H1 (cell line): ENCODE measurements at regions of chr1 and their contacts with region 1.

Region 1: GRCh38 chr1:62424411-62424810 is 12.4 kb upstream of the USP1 start:
- DNase-seq: no peak
- H3K4me3 ChIP-seq: no peak overlapping the region
- H3K27ac ChIP-seq: no peak overlapping the region
- H3K4me1 ChIP-seq: peaks cover 0 to 3% (median 1%) of the 10 kb centered on the region in 4 experiments; a peak in 2 of 7 replicates
- H3K27me3 ChIP-seq: no peaks in the 10 kb centered on the region
- CTCF ChIP-seq: no peak
- EP300 ChIP-seq: no peak
- POLR2A ChIP-seq: no peak
- RAD21 ChIP-seq: no peak

Region 2: GRCh38 chr1:62194651-62195544 is 229.5 kb before region 1 on chr1 and contains the start of gene L1TD1:
- CTCF ChIA-PET with region 1: no interaction called
- POLR2A ChIA-PET with region 1: interaction called, 11 read pairs
- DNase-seq: peak; percentile 88 to 91
- H3K4me3 ChIP-seq: peak within 1 kb of the TSS; percentile 77 to 100 (median 93)
- H3K27ac ChIP-seq: peak within 1 kb of the TSS; percentile 95
- H3K4me1 ChIP-seq: peaks cover 4 to 19% (median 6%) of the 10 kb centered on the region in 4 experiments
- H3K27me3 ChIP-seq: no peaks in the 10 kb centered on the region
- CTCF ChIP-seq: no peak
- EP300 ChIP-seq: no peak; a peak in 1 of 3 replicates
- POLR2A ChIP-seq: peak; percentile 77 to 96
- RAD21 ChIP-seq: no peak
- total RNA-seq, gene L1TD1: 425 and 441 TPM in 2 replicates

Region 3: GRCh38 chr1:62230709-62231108 is 193.7 kb before region 1 on chr1:
- CTCF ChIA-PET with region 1: no interaction called
- POLR2A ChIA-PET with region 1: no interaction called
- DNase-seq: no peak
- H3K4me3 ChIP-seq: no peak overlapping the region
- H3K27ac ChIP-seq: no peak overlapping the region
- H3K4me1 ChIP-seq: peaks cover 6 to 20% (median 11%) of the 10 kb centered on the region in 4 experiments; a peak in 6 of 7 replicates
- H3K27me3 ChIP-seq: no peaks in the 10 kb centered on the region
- CTCF ChIP-seq: no peak
- EP300 ChIP-seq: no peak
- POLR2A ChIP-seq: peak in 1 of 2 experiments; percentile 30; a peak in 1 of 3 replicates
- RAD21 ChIP-seq: no peak

Region 4: DNA sequence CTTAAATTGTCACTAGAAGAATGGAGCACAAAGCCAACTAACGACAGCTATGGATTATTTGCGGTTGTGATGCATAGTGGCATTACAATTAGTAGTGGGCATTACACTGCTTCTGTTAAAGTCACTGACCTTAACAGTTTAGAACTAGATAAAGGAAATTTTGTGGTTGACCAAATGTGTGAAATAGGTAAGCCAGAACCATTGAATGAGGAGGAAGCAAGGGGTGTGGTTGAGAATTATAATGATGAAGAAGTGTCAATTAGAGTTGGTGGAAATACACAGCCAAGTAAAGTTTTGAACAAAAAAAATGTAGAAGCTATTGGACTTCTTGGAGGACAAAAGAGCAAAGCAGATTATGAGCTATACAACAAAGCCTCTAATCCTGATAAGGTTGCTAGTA is 25.9 kb after region 1 on chr1:
- CTCF ChIA-PET with region 1: no interaction called
- POLR2A ChIA-PET with region 1: no interaction called
- DNase-seq: no peak
- H3K4me3 ChIP-seq: no peak overlapping the region
- H3K27ac ChIP-seq: no peak overlapping the region
- H3K4me1 ChIP-seq: no peaks in the 10 kb centered on the region
- H3K27me3 ChIP-seq: no peaks in the 10 kb centered on the region
- CTCF ChIP-seq: no peak
- EP300 ChIP-seq: no peak
- POLR2A ChIP-seq: no peak
- RAD21 ChIP-seq: no peak

Region 5: DNA sequence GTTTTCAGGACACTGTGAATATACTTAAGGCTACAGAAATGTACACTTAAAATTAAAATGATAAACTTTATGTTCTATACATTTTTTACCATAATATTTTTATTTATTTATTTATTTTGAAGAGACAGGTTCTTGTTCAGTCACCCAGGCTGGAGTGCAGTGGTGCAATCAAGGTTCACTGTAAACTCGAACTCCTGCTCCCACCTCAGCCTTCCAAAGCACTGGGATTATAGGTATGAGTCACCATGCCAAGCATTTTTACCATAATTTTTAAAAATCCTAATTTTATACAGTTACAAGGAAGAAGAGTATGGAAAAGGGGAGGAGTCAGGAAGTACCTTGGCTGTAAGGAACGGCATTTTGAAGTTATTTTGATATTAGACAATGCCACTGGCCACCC is 149.3 kb after region 1 on chr1:
- CTCF ChIA-PET with region 1: no interaction called
- POLR2A ChIA-PET with region 1: no interaction called
- DNase-seq: no peak
- H3K4me3 ChIP-seq: no peak overlapping the region
- H3K27ac ChIP-seq: no peak overlapping the region
- H3K4me1 ChIP-seq: no peaks in the 10 kb centered on the region
- H3K27me3 ChIP-seq: no peaks in the 10 kb centered on the region
- CTCF ChIP-seq: no peak
- EP300 ChIP-seq: no peak
- POLR2A ChIP-seq: no peak
- RAD21 ChIP-seq: no peak